OCI-LY7 (cell line): ENCODE measurements at regions of chr7 and their contacts with region 1.

Region 1: DNA sequence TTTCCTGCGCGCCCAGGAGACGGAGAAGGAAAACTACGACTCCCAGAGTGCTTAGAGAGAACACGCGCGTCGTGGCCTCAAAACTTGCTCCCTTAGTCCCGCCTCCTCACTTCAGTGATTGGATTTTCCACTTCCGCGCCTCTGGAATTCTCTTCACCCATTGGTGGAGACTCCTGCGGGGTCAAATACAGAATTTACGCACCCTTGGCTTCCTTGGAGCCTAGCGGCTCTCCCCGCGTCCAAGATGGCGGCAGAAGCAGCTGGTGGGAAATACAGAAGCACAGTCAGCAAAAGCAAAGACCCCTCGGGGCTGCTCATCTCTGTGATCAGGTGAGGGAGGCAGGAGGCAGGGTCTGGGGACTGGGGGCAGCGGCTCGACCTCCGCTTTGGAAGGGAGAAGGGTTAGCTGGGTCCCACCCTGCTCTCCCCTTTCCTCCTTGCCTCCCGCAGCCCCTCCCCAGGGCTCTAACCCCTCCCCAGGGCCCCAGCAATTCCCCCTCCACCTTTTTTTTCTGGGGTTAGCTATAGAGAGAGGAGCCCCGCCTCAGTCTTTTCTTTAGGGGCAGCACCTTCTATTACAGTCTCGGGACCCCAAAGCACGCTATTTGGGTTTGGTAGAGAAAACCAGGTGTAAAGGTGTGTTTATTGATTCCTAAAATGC is at the start of gene EXOC4:
- DNase-seq: peak; percentile 98
- H3K4me3 ChIP-seq: peak within 1 kb of the TSS; percentile 78
- H3K27ac ChIP-seq: peak within 1 kb of the TSS; percentile 30
- H3K4me1 ChIP-seq: no peaks in the 10 kb centered on the region
- CTCF ChIP-seq: no peak
- total RNA-seq, gene EXOC4: 75.1 and 83.4 TPM in 2 replicates

Region 2: DNA sequence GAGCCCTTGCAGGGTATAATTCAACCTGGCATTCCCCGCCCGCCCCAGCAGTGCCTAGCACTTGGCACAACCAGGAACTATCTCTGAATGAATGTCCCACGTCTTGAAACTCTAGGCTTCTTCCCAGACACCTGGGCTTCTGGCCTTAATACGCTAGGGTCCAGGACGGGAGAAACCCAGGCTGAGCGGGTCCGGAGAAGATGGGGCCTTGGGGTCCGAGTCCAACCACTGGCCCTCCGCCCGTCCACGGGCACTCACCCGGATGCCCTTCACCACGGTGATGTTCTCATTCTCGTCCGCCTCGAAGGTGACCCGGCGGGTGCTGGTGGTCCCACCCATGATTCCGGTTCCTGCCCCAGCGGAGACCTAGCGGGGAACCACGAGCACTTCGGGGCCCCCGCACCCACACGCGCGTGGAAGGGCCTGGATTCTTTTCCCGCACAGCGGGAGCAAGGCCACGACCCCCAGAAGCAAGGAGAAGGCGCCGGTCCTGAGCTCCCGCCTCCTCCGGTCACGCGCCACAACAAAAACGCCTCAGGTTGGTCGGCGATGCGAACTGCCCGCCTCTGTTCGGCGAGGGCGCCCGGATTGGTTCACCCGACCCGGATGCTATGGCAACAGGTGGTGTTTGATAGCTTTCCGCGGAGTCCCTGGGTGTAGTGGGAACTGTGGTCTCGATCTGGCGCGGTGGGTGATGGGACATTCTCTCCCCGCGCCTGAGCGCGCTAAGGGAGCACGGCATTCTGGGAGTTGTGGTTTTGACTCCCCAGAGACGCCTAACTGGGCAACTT is 171.2 kb before region 1 on chr7 and contains the start of gene CHCHD3:
- CTCF ChIA-PET with region 1: no interaction called
- POLR2A ChIA-PET with region 1: interaction called, 4 read pairs
- intact Hi-C with region 1: loop called (anchors 5 kb)
- DNase-seq: peak; percentile 98
- H3K4me3 ChIP-seq: peak within 1 kb of the TSS; percentile 91
- H3K27ac ChIP-seq: peak within 1 kb of the TSS; percentile 43
- H3K4me1 ChIP-seq: peaks cover 18% of the 10 kb centered on the region
- CTCF ChIP-seq: no peak
- total RNA-seq, gene CHCHD3: 83.8 and 141 TPM in 2 replicates

Region 3: GRCh38 chr7:133230591-133231194 is 22.3 kb before region 1 on chr7:
- CTCF ChIA-PET with region 1: no interaction called
- POLR2A ChIA-PET with region 1: no interaction called
- intact Hi-C with region 1: no loop called
- DNase-seq: peak; percentile 56
- H3K4me3 ChIP-seq: no peak overlapping the region
- H3K27ac ChIP-seq: no peak overlapping the region
- H3K4me1 ChIP-seq: no peaks in the 10 kb centered on the region
- CTCF ChIP-seq: peak; percentile 92